H1 (cell line): ENCODE measurements at regions of chr5 and their contacts with region 1.

Region 1: GRCh38 chr5:17189381-17190036 is 27.9 kb upstream of the BASP1 start:
- DNase-seq: peak; percentile 66 to 93
- H3K4me3 ChIP-seq: no peak overlapping the region
- H3K27ac ChIP-seq: no peak overlapping the region
- H3K4me1 ChIP-seq: peaks cover 0 to 8% (median 2%) of the 10 kb centered on the region in 4 experiments; a peak in 4 of 7 replicates
- H3K27me3 ChIP-seq: no peaks in the 10 kb centered on the region
- CTCF ChIP-seq: peak; percentile 12 to 86 (median 79)
- EP300 ChIP-seq: no peak
- POLR2A ChIP-seq: no peak
- RAD21 ChIP-seq: peak; percentile 83 to 90

Region 2: GRCh38 chr5:16791036-16791705 is 398.3 kb before region 1 on chr5:
- CTCF ChIA-PET with region 1: interaction called, 60 read pairs
- POLR2A ChIA-PET with region 1: interaction called, 3 read pairs
- DNase-seq: no peak
- H3K4me3 ChIP-seq: no peak overlapping the region
- H3K27ac ChIP-seq: no peak overlapping the region
- H3K4me1 ChIP-seq: peaks cover 0 to 2% (median 0%) of the 10 kb centered on the region in 4 experiments; a peak in 2 of 7 replicates
- H3K27me3 ChIP-seq: no peaks in the 10 kb centered on the region
- CTCF ChIP-seq: peak in 2 of 3 experiments; percentile 55 to 56; a peak in 3 of 4 replicates
- EP300 ChIP-seq: no peak
- POLR2A ChIP-seq: no peak
- RAD21 ChIP-seq: peak; percentile 80 to 81

Region 3: GRCh38 chr5:16812911-16813310 is 376.6 kb before region 1 on chr5:
- CTCF ChIA-PET with region 1: interaction called, 16 read pairs
- POLR2A ChIA-PET with region 1: no interaction called
- DNase-seq: no peak
- H3K4me3 ChIP-seq: no peak overlapping the region
- H3K27ac ChIP-seq: no peak overlapping the region
- H3K4me1 ChIP-seq: no peaks in the 10 kb centered on the region
- H3K27me3 ChIP-seq: no peaks in the 10 kb centered on the region
- CTCF ChIP-seq: no peak
- EP300 ChIP-seq: no peak
- POLR2A ChIP-seq: no peak
- RAD21 ChIP-seq: no peak

Region 4: GRCh38 chr5:16934123-16934522 is 255.4 kb before region 1 on chr5:
- CTCF ChIA-PET with region 1: interaction called, 24 read pairs
- POLR2A ChIA-PET with region 1: no interaction called
- DNase-seq: peak; percentile 51 to 94
- H3K4me3 ChIP-seq: peak overlapping the region; percentile 35 to 97 (median 81); a peak in 5 of 8 replicates
- H3K27ac ChIP-seq: no peak overlapping the region
- H3K4me1 ChIP-seq: peaks cover 2 to 22% (median 5%) of the 10 kb centered on the region in 4 experiments; a peak in 6 of 7 replicates
- H3K27me3 ChIP-seq: peaks cover 11 to 29% (median 22%) of the 10 kb centered on the region in 4 experiments
- CTCF ChIP-seq: peak; percentile 80 to 88 (median 86)
- EP300 ChIP-seq: no peak
- POLR2A ChIP-seq: no peak
- RAD21 ChIP-seq: peak; percentile 68 to 81

Region 5: DNA sequence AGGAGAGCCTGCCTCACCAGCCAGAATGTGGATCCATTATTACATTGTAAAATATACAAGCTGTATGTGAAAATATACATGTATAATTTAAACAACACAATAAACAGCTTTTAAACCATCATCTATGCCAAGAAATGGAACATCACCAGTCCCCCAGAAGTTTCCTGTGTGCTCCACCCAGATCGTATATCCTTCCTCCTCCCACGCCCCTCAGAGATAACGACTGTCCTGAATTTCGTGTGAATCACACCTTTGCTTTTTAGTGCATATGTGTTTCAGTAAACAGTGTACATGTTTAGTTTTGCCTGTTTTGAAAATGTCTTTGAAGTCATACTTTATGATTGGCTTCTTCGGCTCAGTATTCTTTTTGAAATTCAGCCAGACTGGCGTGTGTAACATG is 118.9 kb before region 1 on chr5:
- CTCF ChIA-PET with region 1: no interaction called
- POLR2A ChIA-PET with region 1: no interaction called
- DNase-seq: no peak
- H3K4me3 ChIP-seq: no peak overlapping the region
- H3K27ac ChIP-seq: no peak overlapping the region
- H3K4me1 ChIP-seq: no peaks in the 10 kb centered on the region
- H3K27me3 ChIP-seq: no peaks in the 10 kb centered on the region
- CTCF ChIP-seq: no peak
- EP300 ChIP-seq: no peak
- POLR2A ChIP-seq: no peak
- RAD21 ChIP-seq: no peak

Region 6: DNA sequence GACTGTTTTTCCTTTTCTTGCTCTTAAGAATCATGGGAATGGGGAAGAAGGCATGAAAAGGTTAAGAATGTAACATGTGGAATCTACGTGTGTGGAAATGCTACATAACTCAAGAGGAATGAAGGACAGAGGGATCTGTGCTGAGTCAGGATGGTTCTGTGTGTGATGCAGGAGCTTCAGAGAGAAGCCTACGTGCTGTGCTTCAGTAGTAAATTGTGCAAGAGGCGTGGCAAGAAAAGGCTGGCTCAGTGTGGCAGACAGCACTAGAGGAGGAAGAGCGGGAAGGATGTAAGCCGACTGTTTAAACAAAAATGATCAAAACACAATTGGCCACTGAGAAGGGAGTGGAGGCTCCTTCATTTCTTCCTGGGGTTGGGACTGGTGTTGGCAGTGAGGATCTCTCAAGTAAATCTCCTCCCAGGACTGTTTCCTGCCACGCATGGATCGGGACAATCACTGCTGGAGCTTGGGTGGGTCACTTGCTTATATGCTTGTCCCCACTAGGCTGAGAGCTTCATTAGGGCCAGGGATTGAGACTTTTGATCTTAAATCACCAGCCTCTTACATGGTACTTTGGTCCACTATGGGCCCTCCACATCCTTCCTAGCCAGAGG is 31.5 kb before region 1 on chr5:
- CTCF ChIA-PET with region 1: interaction called, 55 read pairs
- POLR2A ChIA-PET with region 1: no interaction called
- DNase-seq: no peak
- H3K4me3 ChIP-seq: no peak overlapping the region
- H3K27ac ChIP-seq: no peak overlapping the region
- H3K4me1 ChIP-seq: no peaks in the 10 kb centered on the region; a peak in 1 of 7 replicates
- H3K27me3 ChIP-seq: no peaks in the 10 kb centered on the region
- CTCF ChIP-seq: no peak
- EP300 ChIP-seq: no peak
- POLR2A ChIP-seq: no peak
- RAD21 ChIP-seq: no peak